Common myeloid progenitor, CD34-positive (primary cell): ENCODE measurements at regions of chr1 and their contacts with region 1.

Region 1: DNA sequence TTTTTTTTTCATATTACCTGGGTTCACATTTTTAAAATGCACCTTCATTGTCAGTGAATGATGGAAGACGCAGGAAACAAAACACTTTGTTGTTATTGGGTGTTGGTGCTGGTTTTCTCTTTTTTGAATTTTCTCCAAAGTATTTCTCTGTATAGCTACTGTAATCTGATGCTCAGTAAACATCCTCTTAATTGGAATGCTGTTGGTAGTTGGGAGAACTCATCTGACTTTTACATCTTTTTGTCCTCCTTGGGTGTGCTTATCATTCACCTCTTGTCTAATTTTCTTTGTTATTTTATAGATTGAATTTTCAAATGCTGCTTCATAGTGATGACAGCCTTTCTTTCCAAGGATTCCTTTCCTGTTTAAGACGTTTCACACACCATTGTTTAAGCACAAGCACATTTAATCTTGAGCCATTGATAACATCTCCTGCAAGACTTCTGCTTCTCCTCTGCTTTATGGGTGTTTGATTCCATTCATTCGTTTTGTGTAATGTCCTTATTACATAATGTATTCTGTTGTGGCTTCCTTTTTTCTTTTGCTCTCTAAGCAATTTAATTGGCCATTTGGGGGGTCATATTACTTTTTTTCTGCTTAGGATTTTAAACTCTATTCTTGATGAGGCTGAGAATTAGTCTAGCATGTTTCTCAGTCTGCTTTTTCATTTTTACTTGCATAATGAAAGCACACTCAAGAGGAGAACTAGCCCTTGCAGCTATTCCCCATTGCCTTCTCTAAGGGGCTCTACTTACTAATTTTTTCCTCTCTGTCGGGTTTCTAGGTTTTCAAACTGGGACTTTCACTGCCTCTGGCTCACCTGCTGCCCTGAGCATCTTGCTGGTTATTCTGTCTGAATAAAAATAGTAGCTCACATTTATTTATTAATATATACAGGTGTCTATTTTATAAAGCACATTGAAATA is 42.0 kb upstream of the CD34 start:
- DNase-seq: no peak
- H3K4me3 ChIP-seq: no peak overlapping the region
- H3K27ac ChIP-seq: no peak overlapping the region
- H3K4me1 ChIP-seq: peaks cover 0 to 26% (median 13%) of the 10 kb centered on the region in 4 experiments
- H3K27me3 ChIP-seq: no peaks in the 10 kb centered on the region

Region 2: GRCh38 chr1:207941665-207942064 is 11.2 kb before region 1 on chr1:
- CTCF ChIA-PET with region 1: interaction called, 20 read pairs
- POLR2A ChIA-PET with region 1: interaction called, 3 read pairs
- DNase-seq: peak in 2 of 3 donors; percentile 40 to 48
- H3K4me3 ChIP-seq: peak overlapping the region in 3 of 7 experiments; percentile 48 to 73 (median 63)
- H3K27ac ChIP-seq: peak overlapping the region in 1 of 2 experiments; percentile 76
- H3K4me1 ChIP-seq: peaks cover 2 to 40% (median 20%) of the 10 kb centered on the region in 4 experiments
- H3K27me3 ChIP-seq: no peaks in the 10 kb centered on the region

Region 3: GRCh38 chr1:207997486-207998268 is 44.8 kb after region 1 on chr1:
- CTCF ChIA-PET with region 1: no interaction called
- POLR2A ChIA-PET with region 1: no interaction called
- DNase-seq: peak; percentile 57 to 68 (median 57)
- H3K4me3 ChIP-seq: peak overlapping the region in 2 of 7 experiments; percentile 6 to 35
- H3K27ac ChIP-seq: no peak overlapping the region
- H3K4me1 ChIP-seq: peaks cover 0 to 8% (median 2%) of the 10 kb centered on the region in 4 experiments
- H3K27me3 ChIP-seq: no peaks in the 10 kb centered on the region